Activated B cell treated with CpG ODN at 0.5 μM for 24 hours (primary cell): ENCODE measurements at regions of chr9 and their contacts with region 1.

Region 1: GRCh38 chr9:27483576-27483975 is 40.5 kb upstream of the IFNK start:
- DNase-seq: no peak
- ATAC-seq: peak; percentile 68
- H3K4me3 Mint-ChIP-seq: peak overlapping the region; percentile 49
- H3K27ac Mint-ChIP-seq: peak overlapping the region; percentile 81
- H3K4me1 Mint-ChIP-seq: peaks cover 91% of the 10 kb centered on the region
- H3K27me3 Mint-ChIP-seq: no peaks in the 10 kb centered on the region
- CTCF ChIP-seq: no peak

Region 2: DNA sequence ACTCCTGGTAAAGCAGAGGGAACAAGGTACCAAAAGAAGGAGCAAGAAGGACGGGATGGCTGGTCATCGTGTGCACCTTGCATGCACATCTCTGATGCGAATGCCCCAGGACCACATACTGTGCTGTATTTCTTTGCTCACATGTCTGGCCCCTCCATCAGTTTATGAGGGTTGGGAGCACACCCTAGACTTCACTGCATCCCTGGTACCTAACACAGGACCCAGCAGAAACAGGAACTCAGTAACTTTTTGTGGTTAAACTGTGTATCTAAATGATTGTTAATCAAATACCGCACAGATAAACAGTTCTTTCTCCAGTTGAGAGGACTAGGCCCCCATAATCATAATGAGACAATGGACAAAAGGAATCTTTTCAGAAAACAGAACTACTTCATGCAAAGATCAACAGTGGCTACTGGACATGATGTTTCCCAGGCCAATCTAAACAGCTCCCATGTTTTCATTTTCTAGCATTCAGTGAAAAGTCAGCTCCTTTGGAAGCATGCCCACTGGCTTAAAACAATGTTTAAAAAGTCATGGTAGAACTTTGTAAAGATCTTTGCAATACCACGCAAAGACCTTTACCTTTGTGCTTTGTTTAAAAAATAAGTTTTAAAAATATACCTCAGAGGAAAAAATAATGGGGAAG is 15.0 kb before region 1 on chr9:
- CTCF ChIA-PET with region 1: interaction called, 3 read pairs
- POLR2A ChIA-PET with region 1: interaction called, 13 read pairs
- intact Hi-C with region 1: no loop called
- DNase-seq: no peak
- ATAC-seq: peak; percentile 77
- H3K4me3 Mint-ChIP-seq: no peak overlapping the region
- H3K27ac Mint-ChIP-seq: peak overlapping the region; percentile 46
- H3K4me1 Mint-ChIP-seq: peaks cover 81% of the 10 kb centered on the region
- H3K27me3 Mint-ChIP-seq: no peaks in the 10 kb centered on the region
- CTCF ChIP-seq: no peak